ENCODE measurements at regions of chrX and their contacts with region 1.

Region 1: GRCh38 chrX:106999002-106999975 is 723 bp downstream of the MORC4 start:
- DNase-seq: peak; percentile 76 to 80
- H3K4me3 ChIP-seq: peak overlapping the region; percentile 55
- H3K4me1 ChIP-seq: peaks cover 16% of the 10 kb centered on the region
- H3K27me3 ChIP-seq: no peaks in the 10 kb centered on the region

Region 2: GRCh38 chrX:106050054-106050453 is 949.2 kb before region 1 on chrX:
- in situ Hi-C with region 1: no loop called
- DNase-seq: no peak
- H3K4me3 ChIP-seq: no peak overlapping the region
- H3K4me1 ChIP-seq: no peaks in the 10 kb centered on the region
- H3K27me3 ChIP-seq: no peaks in the 10 kb centered on the region

Region 3: GRCh38 chrX:106933041-106933961 is 66.0 kb before region 1 on chrX:
- in situ Hi-C with region 1: no loop called
- DNase-seq: no peak
- H3K4me3 ChIP-seq: no peak overlapping the region
- H3K4me1 ChIP-seq: no peaks in the 10 kb centered on the region
- H3K27me3 ChIP-seq: no peaks in the 10 kb centered on the region

Region 4: GRCh38 chrX:107429090-107429489 is 429.8 kb after region 1 on chrX:
- in situ Hi-C with region 1: loop called (anchors 25 kb)
- DNase-seq: peak in 1 of 2 experiments; percentile 70
- H3K4me3 ChIP-seq: no peak overlapping the region
- H3K4me1 ChIP-seq: no peaks in the 10 kb centered on the region
- H3K27me3 ChIP-seq: no peaks in the 10 kb centered on the region; the same call in 1 of the 2 replicates

Measured in HAP-1 (cell line).